ENCODE measurements at regions of chr17 and their contacts with region 1.

Region 1: GRCh38 chr17:43940630-43941029 is 1.6 kb downstream of the PPY start:
- DNase-seq: peak; percentile 38 to 81
- H3K4me3 ChIP-seq: no peak overlapping the region
- H3K4me1 ChIP-seq: peaks cover 9% of the 10 kb centered on the region
- H3K27me3 ChIP-seq: no peaks in the 10 kb centered on the region

Region 2: DNA sequence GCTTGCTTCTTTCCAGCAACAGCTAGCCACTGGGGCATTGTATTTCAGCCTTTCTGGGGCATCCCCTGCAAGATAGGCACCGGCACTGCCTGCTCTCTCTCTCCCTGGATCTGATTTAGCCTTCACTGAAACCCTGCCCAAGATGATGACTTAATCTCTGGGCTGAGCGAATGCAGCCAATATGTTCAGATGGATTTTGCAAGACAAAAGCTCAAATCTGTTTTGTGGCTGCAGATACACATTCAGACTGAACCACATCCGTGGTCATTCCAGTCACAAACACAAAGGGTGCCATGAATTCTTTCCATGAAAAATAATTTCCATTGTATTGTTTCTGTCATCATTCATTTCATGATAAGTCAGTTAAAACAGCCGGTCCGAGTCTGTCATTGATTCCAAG is 206.3 kb before region 1 on chr17:
- in situ Hi-C with region 1: no loop called
- DNase-seq: peak; percentile 65 to 75
- H3K4me3 ChIP-seq: no peak overlapping the region
- H3K4me1 ChIP-seq: peaks cover 13% of the 10 kb centered on the region
- H3K27me3 ChIP-seq: no peaks in the 10 kb centered on the region

Region 3: DNA sequence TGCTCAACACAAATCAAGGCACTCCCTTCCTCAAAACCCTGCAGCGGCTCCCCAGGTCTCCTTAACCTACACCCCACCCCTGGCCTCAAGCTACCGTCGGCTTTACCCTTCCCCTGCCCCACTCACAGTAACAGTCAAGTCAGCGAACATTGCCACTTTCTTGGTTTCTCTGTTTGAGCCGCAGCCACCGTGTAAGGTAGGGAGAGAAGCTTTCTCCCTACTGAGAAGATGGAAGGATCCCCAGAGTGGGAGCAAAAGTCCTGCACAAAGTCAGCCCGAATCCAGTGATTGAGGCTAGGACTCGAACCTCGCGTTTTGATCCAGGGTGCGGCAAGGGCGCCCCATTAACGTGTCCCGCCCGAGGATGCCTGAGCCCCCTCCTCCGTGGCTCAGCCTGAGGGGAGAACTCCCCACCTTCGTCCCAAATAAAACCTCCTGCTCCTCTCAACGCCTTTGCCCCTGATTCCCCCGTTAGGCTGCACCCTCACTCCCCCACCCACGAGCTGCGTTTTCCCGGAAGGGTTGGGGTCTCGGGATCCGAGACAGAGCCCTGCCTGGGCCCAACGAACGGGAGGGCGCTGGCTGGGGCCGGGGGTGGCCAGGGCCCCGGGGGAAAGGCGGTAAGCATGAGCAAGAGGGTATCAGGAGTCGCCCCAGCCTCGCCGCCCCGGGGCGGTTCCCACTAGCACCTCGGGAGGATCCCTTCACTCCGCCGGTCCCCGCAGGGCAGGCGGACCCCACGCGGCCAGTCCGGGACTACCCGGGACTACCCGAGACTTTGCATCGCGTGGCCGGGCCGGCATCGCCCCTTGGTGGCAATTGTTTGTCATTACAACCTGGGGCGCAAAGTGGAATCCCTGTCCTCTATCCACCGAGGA is 53.9 kb after region 1 on chr17:
- in situ Hi-C with region 1: loop called (anchors 5 kb)
- DNase-seq: peak; percentile 50 to 89
- H3K4me3 ChIP-seq: peak overlapping the region; percentile 34
- H3K4me1 ChIP-seq: peaks cover 5% of the 10 kb centered on the region; the same call in 1 of the 2 replicates
- H3K27me3 ChIP-seq: no peaks in the 10 kb centered on the region

Measured in HAP-1 (cell line).